ENCODE measurements at regions of chr12 and their contacts with region 1.

Region 1: GRCh38 chr12:51047655-51048540 is at the start of gene LETMD1:
- DNase-seq: peak; percentile 91
- H3K4me3 Mint-ChIP-seq: peak within 1 kb of the TSS; percentile 95
- H3K27ac Mint-ChIP-seq: peak within 1 kb of the TSS; percentile 87
- H3K4me1 Mint-ChIP-seq: peaks cover 28% of the 10 kb centered on the region
- H3K27me3 Mint-ChIP-seq: no peaks in the 10 kb centered on the region
- total RNA-seq, gene LETMD1: 70.7 and 74.3 TPM in 2 replicates

Region 2: GRCh38 chr12:50825372-50825838 is 222.5 kb before region 1 on chr12:
- intact Hi-C with region 1: loop called (anchors 1 kb)
- DNase-seq: no peak
- H3K4me3 Mint-ChIP-seq: no peak overlapping the region
- H3K27ac Mint-ChIP-seq: peak overlapping the region; percentile 69
- H3K4me1 Mint-ChIP-seq: peaks cover 10% of the 10 kb centered on the region
- H3K27me3 Mint-ChIP-seq: no peaks in the 10 kb centered on the region

Region 3: DNA sequence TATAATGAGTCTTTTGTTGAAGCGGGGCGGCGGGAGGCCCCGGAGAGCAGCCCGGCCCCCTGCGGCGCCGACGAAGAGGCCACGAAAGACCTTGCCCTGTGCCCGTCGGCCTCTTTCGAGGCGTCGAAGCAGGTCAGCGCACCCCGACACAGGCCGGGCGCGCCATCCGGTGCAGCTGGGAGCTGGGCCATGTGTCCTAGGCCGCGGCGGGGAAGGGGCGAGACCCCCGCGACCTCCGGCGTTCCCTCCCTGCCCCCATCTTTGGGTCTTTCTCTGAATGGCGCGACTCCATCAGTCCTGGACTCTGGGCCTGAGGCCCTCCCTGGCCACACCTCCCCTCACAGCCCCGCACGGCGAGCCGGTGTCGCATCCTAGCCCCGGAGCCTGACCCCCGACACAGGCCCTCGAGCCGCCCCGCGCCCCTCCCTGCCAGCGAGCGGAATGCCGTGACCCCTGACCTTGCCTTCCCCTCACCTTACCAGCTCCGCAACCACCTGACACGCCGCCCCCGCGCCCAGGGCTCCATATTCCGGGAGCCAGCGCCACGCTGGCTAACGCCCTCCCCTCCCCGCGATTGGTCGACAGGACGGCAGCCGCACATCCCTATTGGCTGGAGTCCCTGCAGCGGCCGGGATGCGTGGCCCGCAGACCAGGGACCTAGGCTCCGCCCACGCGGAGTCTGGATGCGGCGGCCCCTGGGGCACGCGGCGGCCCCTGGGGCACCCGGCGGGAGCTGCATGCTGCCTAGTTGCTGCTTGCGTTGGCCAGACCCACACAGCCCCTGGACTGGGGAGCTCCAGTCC is 21.9 kb before region 1 on chr12 and contains the start of gene SLC11A2:
- intact Hi-C with region 1: loop called (anchors 1 kb)
- DNase-seq: peak; percentile 91
- H3K4me3 Mint-ChIP-seq: peak within 1 kb of the TSS; percentile 92
- H3K27ac Mint-ChIP-seq: peak within 1 kb of the TSS; percentile 98
- H3K4me1 Mint-ChIP-seq: peaks cover 55% of the 10 kb centered on the region
- H3K27me3 Mint-ChIP-seq: peaks cover 18% of the 10 kb centered on the region
- total RNA-seq, gene SLC11A2: 56.9 and 63.9 TPM in 2 replicates

Region 4: DNA sequence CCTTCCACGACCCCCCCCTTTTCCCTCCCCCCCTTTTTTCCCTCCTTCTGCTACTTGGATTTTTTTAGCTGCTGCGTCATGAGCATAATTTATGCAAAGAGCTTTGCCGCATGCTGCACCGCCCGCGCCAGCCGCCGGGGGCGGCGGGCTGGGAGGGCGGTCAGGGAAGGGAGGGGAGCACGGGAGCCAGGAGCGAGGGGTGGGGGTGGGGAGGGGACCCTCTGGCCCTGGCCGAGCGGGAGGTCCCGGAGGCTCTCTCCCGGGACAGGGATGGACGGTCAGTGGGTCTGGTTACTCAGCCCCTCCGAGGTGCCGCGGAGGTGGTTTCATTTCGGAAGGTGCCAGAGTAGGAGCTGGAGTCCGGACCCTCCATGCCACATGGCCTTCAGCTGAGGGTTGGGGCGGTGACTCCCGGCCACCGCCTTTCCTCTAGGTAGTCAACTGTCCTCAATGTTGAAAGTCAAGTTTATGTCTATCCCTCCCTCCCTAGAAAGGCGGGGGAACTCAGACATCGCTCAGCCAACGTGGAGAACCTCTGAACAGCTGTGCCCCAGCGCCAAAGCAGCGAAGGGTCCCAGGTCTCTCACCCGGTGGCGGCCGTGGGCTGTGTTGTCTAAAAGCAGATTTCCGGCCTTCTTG is 170.2 kb after region 1 on chr12 and contains the start of gene POU6F1:
- intact Hi-C with region 1: loop called (anchors 1 kb)
- DNase-seq: peak; percentile 60
- H3K4me3 Mint-ChIP-seq: peak within 1 kb of the TSS; percentile 76
- H3K27ac Mint-ChIP-seq: peak within 1 kb of the TSS; percentile 56
- H3K4me1 Mint-ChIP-seq: peaks cover 21% of the 10 kb centered on the region
- H3K27me3 Mint-ChIP-seq: no peaks in the 10 kb centered on the region
- total RNA-seq, gene POU6F1: 5.2 and 6.7 TPM in 2 replicates

Region 5: GRCh38 chr12:51270067-51270970 is 222.4 kb after region 1 on chr12 and contains the start of gene SMAGP:
- intact Hi-C with region 1: loop called (anchors 5 kb)
- DNase-seq: peak; percentile 33
- H3K4me3 Mint-ChIP-seq: peak within 1 kb of the TSS; percentile 88
- H3K27ac Mint-ChIP-seq: peak within 1 kb of the TSS; percentile 68
- H3K4me1 Mint-ChIP-seq: peaks cover 14% of the 10 kb centered on the region
- H3K27me3 Mint-ChIP-seq: peaks cover 30% of the 10 kb centered on the region
- total RNA-seq, gene SMAGP: 0.16 TPM in 1 of 2 replicates, not detected in the other

Region 6: GRCh38 chr12:51341259-51342007 is 293.5 kb after region 1 on chr12:
- intact Hi-C with region 1: loop called (anchors 1 kb)
- DNase-seq: peak; percentile 63
- H3K4me3 Mint-ChIP-seq: no peak overlapping the region
- H3K27ac Mint-ChIP-seq: no peak overlapping the region
- H3K4me1 Mint-ChIP-seq: peaks cover 12% of the 10 kb centered on the region
- H3K27me3 Mint-ChIP-seq: peaks cover 6% of the 10 kb centered on the region